ENCODE measurements at regions of chr4 and their contacts with region 1.

Region 1: GRCh38 chr4:153466081-153466948 is at the start of gene TMEM131L:
- DNase-seq: peak; percentile 83
- H3K4me3 ChIP-seq: peak within 1 kb of the TSS; percentile 80 to 98 (median 86)
- H3K27ac ChIP-seq: peak within 1 kb of the TSS; percentile 83 to 89 (median 86)
- H3K4me1 ChIP-seq: peaks cover 0 to 63% (median 44%) of the 10 kb centered on the region in 4 donors
- H3K27me3 ChIP-seq: no peaks in the 10 kb centered on the region
- CTCF ChIP-seq: peak in 1 of 4 experiments; percentile 8
- EP300 ChIP-seq: no peak
- POLR2A ChIP-seq: no peak
- total RNA-seq, gene TMEM131L: 8.2 to 27.2 (median 15.6) TPM

Region 2: DNA sequence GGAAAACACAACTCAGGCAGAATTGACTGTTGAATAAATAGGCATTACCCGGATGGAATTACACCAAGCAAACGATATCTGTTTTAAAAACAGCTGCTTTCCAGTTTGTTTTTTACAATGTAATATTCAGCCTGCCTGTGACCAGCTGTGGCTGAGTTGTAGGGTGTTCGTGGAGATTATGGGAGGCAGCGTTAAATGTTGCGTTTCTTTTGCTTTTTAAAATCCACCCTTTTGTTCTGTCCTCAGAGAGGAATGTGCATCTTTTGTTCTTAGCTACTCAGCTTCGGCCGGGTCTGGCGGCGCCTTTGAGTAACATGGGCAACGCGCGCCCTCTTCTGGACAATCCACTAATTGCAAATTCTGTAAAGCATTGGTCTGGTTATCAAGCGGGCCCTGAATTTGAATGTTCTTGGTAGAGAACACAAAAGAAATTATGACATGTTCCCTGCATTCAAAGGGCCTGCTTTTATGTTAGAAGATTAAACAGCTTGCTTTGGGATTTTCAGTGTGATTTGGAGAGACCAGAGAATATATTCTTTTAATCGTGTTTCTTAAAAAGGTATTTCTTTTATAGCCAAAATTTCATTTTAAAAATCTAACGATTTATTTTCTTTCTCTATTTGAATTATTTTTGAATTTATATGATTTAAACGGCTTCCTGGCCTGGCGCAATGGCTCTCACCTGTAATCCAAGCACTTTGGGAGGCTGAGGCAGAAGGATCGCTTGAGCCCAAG is 338.4 kb before region 1 on chr4:
- intact Hi-C with region 1: loop called (anchors 10 kb)
- DNase-seq: peak; percentile 88
- H3K4me3 ChIP-seq: no peak overlapping the region
- H3K27ac ChIP-seq: no peak overlapping the region
- H3K4me1 ChIP-seq: peaks cover 0 to 9% (median 1%) of the 10 kb centered on the region in 4 donors
- H3K27me3 ChIP-seq: no peaks in the 10 kb centered on the region
- CTCF ChIP-seq: peak; percentile 32 to 81 (median 74)
- EP300 ChIP-seq: no peak
- POLR2A ChIP-seq: no peak

Region 3: GRCh38 chr4:153344131-153345010 is 121.9 kb before region 1 on chr4 and contains the start of gene MND1:
- intact Hi-C with region 1: loop called (anchors 1 kb)
- DNase-seq: peak; percentile 88
- H3K4me3 ChIP-seq: peak within 1 kb of the TSS; percentile 61 to 91 (median 84)
- H3K27ac ChIP-seq: peak within 1 kb of the TSS; percentile 4 to 75 (median 40)
- H3K4me1 ChIP-seq: peaks cover 0 to 11% (median 8%) of the 10 kb centered on the region in 4 donors
- H3K27me3 ChIP-seq: no peaks in the 10 kb centered on the region
- CTCF ChIP-seq: peak; percentile 50 to 99 (median 70)
- EP300 ChIP-seq: no peak
- POLR2A ChIP-seq: no peak
- total RNA-seq, gene MND1: 2.4 TPM in 1 of 4 donors, not detected in the others

Region 4: GRCh38 chr4:153432968-153433753 is 33.2 kb before region 1 on chr4:
- intact Hi-C with region 1: loop called (anchors 5 kb)
- DNase-seq: peak; percentile 74
- H3K4me3 ChIP-seq: no peak overlapping the region
- H3K27ac ChIP-seq: peak overlapping the region in 2 of 4 donors; percentile 39
- H3K4me1 ChIP-seq: peaks cover 0 to 22% (median 18%) of the 10 kb centered on the region in 4 donors
- H3K27me3 ChIP-seq: no peaks in the 10 kb centered on the region
- CTCF ChIP-seq: peak in 3 of 4 experiments; percentile 7 to 49 (median 41)
- EP300 ChIP-seq: no peak
- POLR2A ChIP-seq: no peak

Region 5: GRCh38 chr4:153535772-153536513 is 69.6 kb after region 1 on chr4:
- intact Hi-C with region 1: loop called (anchors 5 kb)
- DNase-seq: no peak
- H3K4me3 ChIP-seq: no peak overlapping the region
- H3K27ac ChIP-seq: no peak overlapping the region
- H3K4me1 ChIP-seq: peaks cover 0 to 60% (median 33%) of the 10 kb centered on the region in 4 donors
- H3K27me3 ChIP-seq: no peaks in the 10 kb centered on the region
- CTCF ChIP-seq: no peak
- EP300 ChIP-seq: no peak
- POLR2A ChIP-seq: no peak